ENCODE measurements at regions of chrX and their contacts with region 1.

Region 1: GRCh38 chrX:25144043-25144940 is 128.5 kb upstream of the ARX start:
- DNase-seq: peak; percentile 54
- H3K4me3 ChIP-seq: no peak overlapping the region
- H3K27ac ChIP-seq: no peak overlapping the region
- H3K4me1 ChIP-seq: no peaks in the 10 kb centered on the region
- H3K27me3 ChIP-seq: no peaks in the 10 kb centered on the region
- CTCF ChIP-seq: peak; percentile 54 to 72 (median 61)
- EP300 ChIP-seq: no peak
- POLR2A ChIP-seq: no peak

Region 2: DNA sequence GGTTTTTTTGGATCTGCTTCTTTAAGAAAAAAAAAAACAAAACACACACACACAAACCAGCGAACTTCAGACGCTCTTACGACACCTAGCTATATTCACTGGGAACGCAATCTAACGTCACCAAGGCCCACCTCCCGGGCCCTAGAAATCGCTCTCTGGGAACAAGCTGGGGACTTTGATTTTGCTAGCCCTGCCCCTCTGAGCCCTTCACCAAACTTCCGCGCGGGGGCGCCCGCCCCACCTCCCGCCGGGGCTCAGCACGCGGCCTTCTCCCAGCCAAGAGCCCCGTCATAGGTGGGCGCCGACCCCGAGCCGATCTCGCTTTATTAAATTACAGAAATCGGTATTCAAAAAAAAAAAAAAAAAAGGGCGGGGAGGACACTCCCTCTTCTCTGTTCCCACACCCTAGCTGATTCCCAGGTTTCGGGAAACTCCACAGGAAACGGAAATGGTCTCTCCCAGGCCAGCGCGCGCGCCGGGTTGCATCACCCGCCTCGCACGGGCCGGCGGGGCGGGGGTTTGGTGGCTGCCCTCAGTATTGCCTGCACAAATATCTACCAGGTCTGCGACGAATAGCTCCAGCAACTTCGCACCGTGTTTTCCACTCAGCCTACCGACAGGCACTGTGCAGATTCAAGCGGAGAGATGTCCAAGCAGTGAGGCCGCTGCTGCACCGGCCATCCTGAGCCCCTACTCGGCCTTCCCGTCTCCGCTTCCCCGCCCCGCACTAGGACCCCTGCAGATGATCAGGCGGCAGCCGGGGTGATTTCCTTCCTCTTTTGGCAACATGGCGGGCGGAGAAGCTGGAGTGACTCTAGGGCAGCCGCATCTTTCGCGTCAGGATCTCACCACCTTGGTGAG is 1089.9 kb before region 1 on chrX and contains the start of gene EIF2S3:
- in situ Hi-C with region 1: no loop called
- intact Hi-C with region 1: no loop called
- DNase-seq: peak; percentile 91
- H3K4me3 ChIP-seq: peak within 1 kb of the TSS in 2 of 4 donors; percentile 70 to 80
- H3K27ac ChIP-seq: peak within 1 kb of the TSS in 2 of 4 donors; percentile 89 to 92
- H3K4me1 ChIP-seq: peaks cover 0 to 6% (median 0%) of the 10 kb centered on the region in 4 donors
- H3K27me3 ChIP-seq: no peaks in the 10 kb centered on the region
- CTCF ChIP-seq: peak; percentile 49 to 69 (median 58)
- EP300 ChIP-seq: no peak
- POLR2A ChIP-seq: peak; percentile 78
- total RNA-seq, gene EIF2S3: 50.5 to 129 (median 80.5) TPM

Region 3: DNA sequence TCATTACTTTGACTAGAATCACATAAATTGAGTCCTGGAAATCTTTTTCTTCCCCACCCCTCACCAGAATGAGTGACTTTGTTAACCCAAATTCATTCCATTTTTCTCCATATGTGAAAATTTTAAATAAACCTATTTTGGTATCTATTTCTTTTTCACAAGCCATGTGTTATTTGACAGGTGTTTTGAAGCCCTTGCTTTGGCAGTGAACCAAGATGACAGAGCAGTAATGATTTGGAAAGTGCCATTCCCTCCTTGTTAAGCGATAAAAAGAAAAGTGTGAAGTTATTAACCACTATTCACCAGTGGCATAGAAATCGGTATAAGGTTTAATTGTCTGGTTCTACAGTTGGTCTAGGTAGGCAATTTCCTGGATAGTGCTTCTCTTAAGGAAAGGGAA is 384.5 kb before region 1 on chrX:
- in situ Hi-C with region 1: loop called in 2 of 4 experiments (anchors 10 kb)
- intact Hi-C with region 1: no loop called
- DNase-seq: no peak
- H3K4me3 ChIP-seq: no peak overlapping the region
- H3K27ac ChIP-seq: no peak overlapping the region
- H3K4me1 ChIP-seq: no peaks in the 10 kb centered on the region
- H3K27me3 ChIP-seq: no peaks in the 10 kb centered on the region
- CTCF ChIP-seq: no peak
- EP300 ChIP-seq: no peak
- POLR2A ChIP-seq: no peak

Region 4: GRCh38 chrX:24838629-24839028 is 305.7 kb before region 1 on chrX:
- in situ Hi-C with region 1: loop called in 3 of 4 experiments (anchors 10 kb)
- intact Hi-C with region 1: loop called (anchors 10 kb)
- DNase-seq: no peak
- H3K4me3 ChIP-seq: no peak overlapping the region
- H3K27ac ChIP-seq: no peak overlapping the region
- H3K4me1 ChIP-seq: no peaks in the 10 kb centered on the region
- H3K27me3 ChIP-seq: no peaks in the 10 kb centered on the region
- CTCF ChIP-seq: peak; percentile 33 to 57 (median 38)
- EP300 ChIP-seq: no peak
- POLR2A ChIP-seq: no peak

Region 5: GRCh38 chrX:24982306-24982965 is 161.9 kb before region 1 on chrX:
- in situ Hi-C with region 1: no loop called
- intact Hi-C with region 1: no loop called
- DNase-seq: no peak
- H3K4me3 ChIP-seq: no peak overlapping the region
- H3K27ac ChIP-seq: no peak overlapping the region
- H3K4me1 ChIP-seq: no peaks in the 10 kb centered on the region
- H3K27me3 ChIP-seq: no peaks in the 10 kb centered on the region
- CTCF ChIP-seq: no peak
- EP300 ChIP-seq: no peak
- POLR2A ChIP-seq: no peak

Region 6: DNA sequence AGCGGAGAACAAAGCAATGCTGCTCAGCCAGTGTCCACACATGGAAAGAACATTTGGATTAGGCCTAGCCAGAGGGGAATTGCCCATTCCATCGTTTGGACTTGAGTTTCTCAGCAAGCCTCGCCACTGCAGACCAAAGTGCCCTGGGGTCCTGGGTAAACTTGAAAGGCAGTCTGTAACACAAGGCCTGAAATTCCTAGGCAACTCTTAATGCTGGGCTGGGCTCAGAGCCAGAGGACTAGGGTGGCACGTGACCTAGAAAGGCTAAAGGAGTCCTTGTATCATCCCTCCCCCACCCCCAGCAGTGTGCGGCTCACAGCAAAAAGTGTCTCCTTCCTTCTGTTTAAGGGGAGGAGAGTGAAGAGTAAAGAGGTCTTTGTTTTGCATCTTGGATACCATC is 81.9 kb after region 1 on chrX:
- in situ Hi-C with region 1: no loop called
- intact Hi-C with region 1: no loop called
- DNase-seq: no peak
- H3K4me3 ChIP-seq: no peak overlapping the region
- H3K27ac ChIP-seq: no peak overlapping the region
- H3K4me1 ChIP-seq: no peaks in the 10 kb centered on the region
- H3K27me3 ChIP-seq: no peaks in the 10 kb centered on the region
- CTCF ChIP-seq: no peak
- EP300 ChIP-seq: no peak
- POLR2A ChIP-seq: no peak